AG04449 (cell line): ENCODE measurements at regions of chr9 and their contacts with region 1.

Region 1: DNA sequence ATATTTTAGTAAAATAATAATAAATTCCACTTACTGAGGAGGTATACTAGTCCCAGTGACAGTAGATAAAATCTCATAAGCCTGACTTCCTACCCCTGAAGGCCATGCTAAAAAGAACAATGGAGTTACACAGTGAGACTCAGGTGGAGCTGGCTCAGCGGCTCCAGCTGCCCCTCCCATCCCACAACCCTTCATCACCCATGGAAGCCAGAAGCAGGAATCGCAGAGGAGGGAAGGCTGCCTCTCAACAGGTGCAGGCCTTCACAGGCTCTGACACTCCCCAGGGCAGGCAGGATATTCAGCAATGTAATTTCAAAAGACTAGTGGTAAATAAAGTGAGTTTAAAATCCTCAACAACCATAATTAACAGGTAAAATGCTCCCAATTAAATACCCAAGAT is 67.5 kb downstream of the FANCC start:
- DNase-seq: no peak
- H3K4me3 ChIP-seq: no peak overlapping the region
- CTCF ChIP-seq: no peak

Region 2: DNA sequence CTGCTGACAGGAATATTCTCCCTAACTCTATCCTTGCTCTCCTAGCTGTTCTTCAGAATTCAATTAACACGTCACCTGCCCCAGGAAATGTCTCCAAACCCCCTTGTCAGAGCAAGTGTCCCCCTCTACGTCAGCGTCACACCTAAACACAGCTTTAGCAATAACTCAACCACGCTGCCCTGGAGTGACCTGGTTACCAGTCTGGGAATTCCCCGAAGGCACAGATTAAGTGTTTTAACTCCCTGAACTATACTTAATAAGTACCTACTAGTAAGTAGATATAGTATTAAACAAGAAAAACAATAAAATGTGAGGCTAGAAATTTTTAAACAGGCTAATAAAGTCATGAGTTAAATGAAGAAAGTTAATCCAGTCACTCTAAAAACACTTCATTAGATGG is 10.9 kb before region 1 on chr9:
- CTCF ChIA-PET with region 1: no interaction called
- POLR2A ChIA-PET with region 1: no interaction called
- DNase-seq: no peak
- H3K4me3 ChIP-seq: no peak overlapping the region
- CTCF ChIP-seq: no peak

Region 3: DNA sequence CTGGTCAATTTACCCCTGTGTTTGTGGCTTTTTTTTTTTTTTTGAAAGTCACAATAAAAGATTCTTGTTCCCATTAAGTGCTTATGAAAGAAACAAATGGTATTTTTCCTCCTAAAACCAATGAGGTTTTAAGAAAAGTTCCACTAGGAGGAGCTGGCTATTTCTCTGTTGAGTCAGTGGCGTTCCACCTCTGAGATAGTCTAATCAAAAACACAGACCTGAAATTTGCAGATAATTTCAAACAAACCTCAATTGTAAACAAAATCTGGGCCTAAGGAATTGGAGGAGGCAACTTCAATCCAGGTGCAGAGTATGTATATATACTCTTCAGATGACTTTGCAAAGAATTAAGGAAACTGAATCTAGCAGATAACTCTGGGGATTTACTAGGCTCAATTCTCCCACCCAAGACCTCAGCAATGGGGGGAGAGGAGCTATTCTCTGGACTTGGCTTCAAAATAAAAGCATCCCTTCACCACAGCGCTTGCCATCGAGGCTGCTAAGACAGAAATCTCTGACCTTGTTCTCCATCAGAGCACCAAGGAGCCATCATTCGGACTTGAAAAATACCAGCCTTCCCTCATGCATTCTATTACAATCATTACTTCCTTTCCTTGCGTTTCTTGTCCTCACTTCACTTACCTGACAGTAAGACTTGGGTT is 15.1 kb after region 1 on chr9:
- CTCF ChIA-PET with region 1: interaction called, 14 read pairs
- POLR2A ChIA-PET with region 1: no interaction called
- DNase-seq: no peak
- H3K4me3 ChIP-seq: no peak overlapping the region
- CTCF ChIP-seq: peak; percentile 32